HCT116 (cell line): ENCODE measurements at regions of chr17 and their contacts with region 1.

Region 1: GRCh38 chr17:57995076-57995956 is 7.3 kb upstream of the VEZF1 start:
- DNase-seq: peak; percentile 80
- ATAC-seq: peak; percentile 81
- H3K4me3 ChIP-seq: no peak overlapping the region
- H3K27ac ChIP-seq: peak overlapping the region; percentile 17; the same call in 1 of the 2 replicates
- H3K4me1 ChIP-seq: peaks cover 39 to 83% of the 10 kb centered on the region in 2 experiments
- H3K27me3 ChIP-seq: no peaks in the 10 kb centered on the region
- CTCF ChIP-seq: peak; percentile 74 to 94 (median 87)
- POLR2A ChIP-seq: no peak
- RAD21 ChIP-seq: peak; percentile 95

Region 2: GRCh38 chr17:57284984-57285646 is 710.2 kb before region 1 on chr17:
- CTCF ChIA-PET with region 1: no interaction called
- POLR2A ChIA-PET with region 1: no interaction called
- RAD21 ChIA-PET with region 1: no interaction called
- intact Hi-C with region 1: no loop called
- DNase-seq: no peak
- ATAC-seq: no peak
- H3K4me3 ChIP-seq: no peak overlapping the region
- H3K27ac ChIP-seq: no peak overlapping the region
- H3K4me1 ChIP-seq: no peaks in the 10 kb centered on the region
- H3K27me3 ChIP-seq: no peaks in the 10 kb centered on the region
- CTCF ChIP-seq: no peak
- POLR2A ChIP-seq: no peak
- RAD21 ChIP-seq: no peak

Region 3: DNA sequence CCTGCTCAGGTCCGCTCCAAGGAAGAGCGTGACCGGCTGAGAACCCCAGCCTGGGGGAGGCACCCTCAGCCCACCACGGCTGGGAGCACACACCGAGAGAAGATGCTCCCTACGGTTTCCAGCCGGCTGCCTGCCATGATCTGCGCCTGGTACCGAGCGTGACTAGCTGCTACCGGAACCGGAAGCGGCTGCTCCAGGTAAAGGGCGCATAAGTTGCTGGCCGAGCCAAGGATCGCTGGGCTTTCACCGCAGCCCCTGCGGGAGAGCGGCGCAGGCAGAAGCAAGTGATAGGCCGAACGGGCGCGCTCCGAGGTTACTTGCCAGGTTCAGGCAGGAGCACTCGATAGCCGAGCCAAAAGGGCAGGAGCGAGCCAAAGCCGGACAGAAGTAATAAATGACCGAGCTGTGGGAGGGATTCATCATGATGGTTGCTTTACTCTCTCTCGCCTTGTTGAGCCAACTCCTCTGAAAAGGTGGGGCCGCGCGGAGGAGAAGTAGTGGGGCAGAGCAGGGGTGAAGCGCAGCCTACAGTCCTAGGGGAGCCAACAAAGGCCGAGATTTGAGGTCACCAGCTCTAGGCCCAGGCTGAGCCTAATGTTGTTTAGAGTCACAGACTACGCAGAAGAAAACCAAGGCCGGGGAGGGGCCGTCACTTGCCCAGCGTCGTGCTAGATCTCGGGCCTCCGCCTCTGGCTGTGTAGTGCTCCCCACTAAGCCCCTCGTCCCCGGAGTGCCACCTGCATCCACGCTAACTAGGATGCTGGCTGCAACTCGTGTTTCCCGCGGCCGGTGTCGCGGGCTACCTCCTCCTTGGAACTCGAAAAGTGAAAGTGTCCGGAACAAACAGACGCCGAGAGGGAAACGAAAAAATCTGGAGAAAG is 145.2 kb before region 1 on chr17 and contains the start of gene MRPS23:
- CTCF ChIA-PET with region 1: interaction called, 288 read pairs
- POLR2A ChIA-PET with region 1: interaction called, 11 read pairs
- RAD21 ChIA-PET with region 1: interaction called, 3 read pairs
- intact Hi-C with region 1: loop called (anchors 2 kb)
- DNase-seq: peak; percentile 98
- ATAC-seq: peak; percentile 92
- H3K4me3 ChIP-seq: peak within 1 kb of the TSS; percentile 88 to 94
- H3K27ac ChIP-seq: peak within 1 kb of the TSS; percentile 71
- H3K4me1 ChIP-seq: peaks cover 12 to 34% of the 10 kb centered on the region in 2 experiments
- H3K27me3 ChIP-seq: no peaks in the 10 kb centered on the region
- CTCF ChIP-seq: no peak
- POLR2A ChIP-seq: peak; percentile 11
- RAD21 ChIP-seq: no peak
- total RNA-seq, gene MRPS23: 109 TPM

Region 4: GRCh38 chr17:57868007-57868909 is 127.1 kb before region 1 on chr17:
- CTCF ChIA-PET with region 1: interaction called, 288 read pairs
- POLR2A ChIA-PET with region 1: no interaction called
- RAD21 ChIA-PET with region 1: no interaction called
- intact Hi-C with region 1: no loop called
- DNase-seq: peak; percentile 90
- ATAC-seq: peak; percentile 85
- H3K4me3 ChIP-seq: peak overlapping the region; percentile 6 to 41; a peak in 3 of 4 replicates
- H3K27ac ChIP-seq: peak overlapping the region; percentile 77
- H3K4me1 ChIP-seq: peaks cover 47 to 88% of the 10 kb centered on the region in 2 experiments
- H3K27me3 ChIP-seq: no peaks in the 10 kb centered on the region
- CTCF ChIP-seq: peak in 2 of 3 experiments; percentile 74 to 77; a peak in 4 of 6 replicates
- POLR2A ChIP-seq: no peak
- RAD21 ChIP-seq: no peak

Region 5: GRCh38 chr17:57892146-57892828 is 103.0 kb before region 1 on chr17:
- CTCF ChIA-PET with region 1: interaction called, 12 read pairs
- POLR2A ChIA-PET with region 1: interaction called, 10 read pairs
- RAD21 ChIA-PET with region 1: no interaction called
- intact Hi-C with region 1: loop called (anchors 1 kb)
- DNase-seq: peak; percentile 81
- ATAC-seq: peak; percentile 71
- H3K4me3 ChIP-seq: peak overlapping the region; percentile 27 to 40
- H3K27ac ChIP-seq: peak overlapping the region; percentile 82
- H3K4me1 ChIP-seq: peaks cover 67 to 83% of the 10 kb centered on the region in 2 experiments
- H3K27me3 ChIP-seq: no peaks in the 10 kb centered on the region
- CTCF ChIP-seq: peak in 2 of 3 experiments; percentile 99 to 100; a peak in 4 of 6 replicates
- POLR2A ChIP-seq: no peak
- RAD21 ChIP-seq: no peak

Region 6: DNA sequence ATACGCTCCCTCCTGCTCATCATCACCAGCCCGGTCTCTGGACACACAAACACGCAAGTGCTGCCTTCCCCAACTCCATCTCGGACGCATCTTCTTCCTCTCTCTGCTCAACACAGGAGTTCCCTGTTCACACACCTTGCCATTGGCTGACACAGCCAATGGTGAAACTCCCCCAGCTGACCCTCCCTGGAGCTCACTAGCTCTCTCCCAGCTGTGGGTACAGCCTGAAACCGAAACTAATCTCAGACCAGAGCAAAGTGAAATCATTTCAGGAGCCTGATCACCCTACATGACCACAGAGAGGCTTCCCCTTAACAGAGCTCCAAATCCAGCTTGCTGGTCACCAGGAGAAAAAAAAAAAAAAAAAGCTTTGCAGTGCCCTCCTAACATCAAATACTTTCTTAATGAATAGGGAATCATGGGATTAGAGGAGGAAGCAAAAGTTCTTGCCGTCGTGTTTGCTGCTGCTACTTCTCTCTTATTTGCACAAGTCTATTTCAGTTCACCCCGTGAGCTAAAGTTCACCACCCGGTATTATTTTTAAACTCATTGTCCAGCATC is 48.4 kb before region 1 on chr17:
- CTCF ChIA-PET with region 1: interaction called, 12 read pairs
- POLR2A ChIA-PET with region 1: interaction called, 6 read pairs
- RAD21 ChIA-PET with region 1: no interaction called
- intact Hi-C with region 1: no loop called
- DNase-seq: no peak
- ATAC-seq: no peak
- H3K4me3 ChIP-seq: peak overlapping the region; percentile 21 to 48
- H3K27ac ChIP-seq: peak overlapping the region; percentile 97
- H3K4me1 ChIP-seq: peaks cover 90 to 98% of the 10 kb centered on the region in 2 experiments
- H3K27me3 ChIP-seq: no peaks in the 10 kb centered on the region
- CTCF ChIP-seq: no peak
- POLR2A ChIP-seq: no peak
- RAD21 ChIP-seq: no peak

Region 7: DNA sequence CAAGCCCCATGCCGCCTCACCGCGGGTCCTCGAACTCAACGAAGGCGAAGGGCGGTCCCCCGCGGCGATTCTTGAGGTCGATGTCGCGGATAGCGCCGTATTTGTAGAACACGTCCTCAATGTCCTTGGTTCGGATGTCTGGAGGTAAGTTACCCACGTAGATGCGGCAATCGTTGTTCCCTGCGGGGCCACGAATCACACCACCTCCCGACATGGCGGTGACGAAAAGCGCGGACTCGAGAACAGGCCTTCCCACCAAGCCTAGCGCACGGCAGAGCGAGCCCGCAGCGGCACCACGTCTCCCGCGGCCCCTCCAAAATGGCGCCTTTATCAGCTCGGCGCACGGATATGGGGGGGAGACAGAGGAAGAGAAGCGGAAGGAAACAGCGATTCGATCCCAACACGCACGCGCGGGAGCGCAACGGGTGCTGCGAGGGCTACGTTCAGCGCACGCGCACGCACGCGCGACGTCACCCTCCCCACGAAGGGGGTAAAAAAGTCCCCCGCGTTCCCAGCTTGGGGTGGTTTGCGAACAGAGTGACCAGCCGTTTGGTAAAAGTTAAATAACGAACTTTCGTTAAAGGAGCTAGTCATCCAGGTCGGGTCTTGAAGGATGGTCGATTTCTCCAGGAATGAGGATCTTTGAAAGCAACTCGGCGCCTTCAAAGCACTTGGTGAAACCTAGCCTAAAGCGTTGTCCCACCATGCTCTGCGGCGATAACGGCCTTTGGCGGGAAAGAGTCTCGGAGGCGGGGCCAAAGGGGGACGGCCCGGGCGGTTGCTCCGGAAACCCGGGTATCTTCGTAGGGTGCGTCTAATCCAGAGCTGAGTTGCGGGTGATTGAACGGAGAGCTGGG is 11.8 kb after region 1 on chr17 and contains the start of gene SRSF1:
- CTCF ChIA-PET with region 1: interaction called, 57 read pairs
- POLR2A ChIA-PET with region 1: interaction called, 33 read pairs
- RAD21 ChIA-PET with region 1: interaction called in 1 of 2 experiments, 3 read pairs
- intact Hi-C with region 1: no loop called
- DNase-seq: peak; percentile 99
- ATAC-seq: peak; percentile 86
- H3K4me3 ChIP-seq: peak within 1 kb of the TSS; percentile 88 to 94
- H3K27ac ChIP-seq: peak within 1 kb of the TSS; percentile 100
- H3K4me1 ChIP-seq: peaks cover 24 to 41% of the 10 kb centered on the region in 2 experiments
- H3K27me3 ChIP-seq: no peaks in the 10 kb centered on the region
- CTCF ChIP-seq: no peak
- POLR2A ChIP-seq: peak; percentile 85
- RAD21 ChIP-seq: no peak
- total RNA-seq, gene SRSF1: 434 TPM

Region 8: GRCh38 chr17:58046239-58047094 is 51.2 kb after region 1 on chr17:
- CTCF ChIA-PET with region 1: no interaction called
- POLR2A ChIA-PET with region 1: no interaction called
- RAD21 ChIA-PET with region 1: no interaction called
- intact Hi-C with region 1: no loop called
- DNase-seq: no peak
- ATAC-seq: no peak; the same call in 1 of the 2 replicates
- H3K4me3 ChIP-seq: no peak overlapping the region
- H3K27ac ChIP-seq: no peak overlapping the region
- H3K4me1 ChIP-seq: no peaks in the 10 kb centered on the region
- H3K27me3 ChIP-seq: no peaks in the 10 kb centered on the region
- CTCF ChIP-seq: no peak
- POLR2A ChIP-seq: no peak
- RAD21 ChIP-seq: no peak

Region 9: GRCh38 chr17:58605470-58605869 is 610.2 kb after region 1 on chr17:
- CTCF ChIA-PET with region 1: no interaction called
- POLR2A ChIA-PET with region 1: no interaction called
- RAD21 ChIA-PET with region 1: no interaction called
- intact Hi-C with region 1: no loop called
- DNase-seq: no peak
- ATAC-seq: peak; percentile 73
- H3K4me3 ChIP-seq: no peak overlapping the region
- H3K27ac ChIP-seq: no peak overlapping the region
- H3K4me1 ChIP-seq: no peaks in the 10 kb centered on the region
- H3K27me3 ChIP-seq: no peaks in the 10 kb centered on the region
- CTCF ChIP-seq: peak in 1 of 3 experiments; percentile 19; a peak in 2 of 6 replicates
- POLR2A ChIP-seq: no peak
- RAD21 ChIP-seq: no peak

Region 10: GRCh38 chr17:59244081-59244480 is 1248.8 kb after region 1 on chr17:
- CTCF ChIA-PET with region 1: no interaction called
- POLR2A ChIA-PET with region 1: no interaction called
- RAD21 ChIA-PET with region 1: no interaction called
- intact Hi-C with region 1: no loop called
- DNase-seq: no peak
- ATAC-seq: no peak
- H3K4me3 ChIP-seq: no peak overlapping the region
- H3K27ac ChIP-seq: no peak overlapping the region
- H3K4me1 ChIP-seq: no peaks in the 10 kb centered on the region
- H3K27me3 ChIP-seq: no peaks in the 10 kb centered on the region
- CTCF ChIP-seq: no peak
- POLR2A ChIP-seq: no peak
- RAD21 ChIP-seq: no peak